CD14-positive monocyte (primary cell): ENCODE measurements at regions of chr18 and their contacts with region 1.

Region 1: DNA sequence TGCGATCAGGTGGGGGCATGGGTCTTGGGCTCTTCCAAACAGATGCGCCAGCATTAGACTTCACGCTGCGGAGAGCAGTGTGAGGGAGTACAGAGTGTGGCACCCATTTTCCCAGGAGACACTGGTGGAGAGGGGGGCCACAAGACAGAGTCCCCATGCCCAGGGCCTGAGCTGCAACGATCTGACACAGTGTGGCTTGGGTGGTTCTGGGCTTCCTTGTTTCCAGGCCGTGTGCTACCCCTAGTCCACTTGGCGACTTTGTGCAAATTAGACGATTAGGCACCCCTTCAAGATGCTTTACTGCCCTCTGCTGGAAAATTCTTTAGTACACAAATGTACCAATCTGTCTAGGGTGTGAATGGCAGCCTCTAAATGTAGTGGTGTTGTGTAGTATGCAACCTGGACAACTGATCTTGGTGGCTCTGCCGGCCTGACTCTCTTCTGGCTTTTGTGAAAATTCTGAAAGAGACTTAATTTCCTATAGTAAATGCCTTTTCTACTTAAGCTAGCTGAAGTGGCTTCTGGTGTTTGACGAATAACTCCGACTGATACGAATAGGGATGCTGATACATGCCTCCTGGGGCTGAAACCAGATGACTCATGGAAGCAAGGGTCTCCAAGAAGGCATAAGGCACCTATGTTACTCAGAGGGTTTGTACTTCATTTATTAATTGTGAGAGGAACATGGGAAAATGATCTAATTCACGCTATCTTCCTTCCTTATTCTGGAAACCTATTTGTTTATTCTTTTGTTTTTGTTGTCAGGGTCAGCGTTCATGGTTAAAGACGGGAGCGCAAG is 92.3 kb upstream of the SMAD2 start:
- DNase-seq: peak; percentile 65 to 82 (median 75)
- H3K4me3 ChIP-seq: no peak overlapping the region
- H3K4me3 Mint-ChIP-seq: peak overlapping the region in 1 of 2 donors; percentile 23
- H3K27ac ChIP-seq: no peak overlapping the region
- H3K27ac Mint-ChIP-seq: peak overlapping the region in 2 of 7 donors; percentile 23 to 75
- H3K4me1 ChIP-seq: no peaks in the 10 kb centered on the region
- H3K4me1 Mint-ChIP-seq: peaks cover 3% of the 10 kb centered on the region
- H3K27me3 ChIP-seq: peaks cover 0 to 8% of the 10 kb centered on the region in 2 donors
- H3K27me3 Mint-ChIP-seq: peaks cover 7 to 16% (median 10%) of the 10 kb centered on the region in 3 donors
- CTCF ChIP-seq: peak; percentile 75

Region 2: DNA sequence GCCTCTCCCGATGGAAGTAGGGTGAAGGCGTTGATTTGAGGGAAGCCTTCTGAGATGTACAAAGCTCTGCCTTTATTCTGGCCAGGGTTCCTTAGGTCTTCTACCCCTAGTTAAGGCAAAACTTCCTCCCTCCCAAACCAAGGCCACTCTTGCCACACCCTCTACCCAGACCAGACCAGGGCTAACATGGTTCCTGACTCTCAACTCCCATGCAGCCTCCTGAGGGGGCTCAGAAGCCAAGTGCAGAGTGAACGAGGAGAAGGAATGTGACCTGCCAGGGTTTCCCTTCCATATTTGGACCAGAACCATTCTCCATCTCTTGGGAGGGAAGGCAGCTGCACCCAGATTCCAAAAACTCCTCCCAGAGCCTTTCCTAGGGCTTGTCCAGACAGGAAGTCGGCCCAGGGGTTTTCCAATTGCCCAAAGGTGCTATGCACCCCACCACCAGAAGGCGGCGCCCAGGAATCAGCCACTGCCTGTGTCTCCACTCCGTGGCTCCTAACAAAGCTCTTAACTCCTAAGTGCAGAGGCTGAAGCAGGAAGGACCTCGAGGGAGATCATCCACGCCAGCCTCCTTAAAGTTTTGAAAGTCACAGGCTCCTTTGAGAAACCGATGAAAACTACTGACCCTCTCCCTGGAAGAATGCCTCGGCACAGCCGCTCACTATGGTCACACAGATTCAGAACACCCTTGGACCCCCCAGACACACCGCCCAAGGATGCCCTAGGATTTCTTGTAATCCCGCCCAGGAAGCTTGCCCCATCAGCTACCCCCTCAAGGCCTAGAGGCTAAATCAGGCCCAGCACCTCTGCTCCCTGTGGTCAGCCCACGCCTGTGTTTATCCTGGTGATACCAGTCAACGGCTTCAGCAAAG is 250.1 kb before region 1 on chr18:
- intact Hi-C with region 1: loop called (anchors 1 to 2 kb)
- DNase-seq: peak; percentile 18 to 53 (median 26)
- H3K4me3 ChIP-seq: no peak overlapping the region
- H3K4me3 Mint-ChIP-seq: no peak overlapping the region
- H3K27ac ChIP-seq: no peak overlapping the region
- H3K27ac Mint-ChIP-seq: peak overlapping the region in 1 of 7 donors; percentile 9
- H3K4me1 ChIP-seq: no peaks in the 10 kb centered on the region
- H3K4me1 Mint-ChIP-seq: no peaks in the 10 kb centered on the region
- H3K27me3 ChIP-seq: no peaks in the 10 kb centered on the region
- H3K27me3 Mint-ChIP-seq: peaks cover 7 to 10% (median 9%) of the 10 kb centered on the region in 3 donors
- CTCF ChIP-seq: peak; percentile 97

Region 3: DNA sequence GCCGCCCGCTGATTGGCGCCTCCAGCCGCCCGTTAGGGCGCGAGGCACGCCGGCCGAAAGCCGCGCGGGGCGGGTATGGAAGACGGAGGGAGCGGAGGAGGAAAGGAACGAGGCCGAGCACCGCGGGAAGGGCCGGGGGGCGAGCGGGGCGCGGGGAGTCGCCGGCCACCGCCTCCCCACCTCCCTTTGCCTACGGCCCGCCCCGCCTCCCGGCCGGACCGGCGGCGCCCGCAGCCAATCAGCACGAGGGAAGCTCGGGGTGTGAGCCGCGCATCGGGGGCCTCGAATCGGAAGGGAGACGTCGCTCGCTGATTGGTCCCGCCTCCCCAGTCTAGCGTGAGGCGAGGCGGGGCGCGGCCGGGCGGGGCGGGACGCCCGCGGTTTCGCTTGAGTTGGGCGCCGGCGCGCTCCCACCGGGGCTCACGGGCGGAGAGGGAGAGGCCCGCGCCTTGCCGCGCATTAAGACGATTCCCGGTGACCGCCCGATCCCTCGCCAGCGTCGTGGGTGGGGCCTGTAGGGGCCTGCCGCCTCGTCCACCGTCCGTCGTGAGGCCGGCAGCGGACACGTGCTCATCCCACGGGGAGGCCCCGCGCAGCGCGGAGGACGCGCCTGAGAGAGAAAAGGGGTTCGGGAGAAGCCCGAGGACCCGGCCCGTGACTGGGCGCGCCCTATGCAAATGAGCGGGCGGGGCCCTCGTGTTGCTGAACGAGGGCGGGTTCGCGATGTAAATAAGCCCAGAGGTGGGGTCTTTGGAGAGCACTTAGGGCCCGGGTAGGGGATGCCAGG is 91.6 kb before region 1 on chr18:
- intact Hi-C with region 1: loop called in 1 of 2 experiments (anchors 5 kb)
- DNase-seq: peak; percentile 93 to 94 (median 93)
- H3K4me3 ChIP-seq: peak overlapping the region; percentile 28 to 87 (median 46)
- H3K4me3 Mint-ChIP-seq: peak overlapping the region; percentile 78 to 86
- H3K27ac ChIP-seq: peak overlapping the region; percentile 87 to 94
- H3K27ac Mint-ChIP-seq: peak overlapping the region; percentile 88 to 94 (median 91)
- H3K4me1 ChIP-seq: peaks cover 35 to 41% of the 10 kb centered on the region in 2 donors
- H3K4me1 Mint-ChIP-seq: peaks cover 50% of the 10 kb centered on the region
- H3K27me3 ChIP-seq: no peaks in the 10 kb centered on the region
- H3K27me3 Mint-ChIP-seq: peaks cover 0 to 2% (median 0%) of the 10 kb centered on the region in 3 donors
- CTCF ChIP-seq: no peak

Region 4: GRCh38 chr18:47953471-47953931 is 69.2 kb before region 1 on chr18:
- intact Hi-C with region 1: no loop called
- DNase-seq: peak; percentile 86 to 94 (median 87)
- H3K4me3 ChIP-seq: peak overlapping the region in 1 of 3 experiments; percentile 16
- H3K4me3 Mint-ChIP-seq: peak overlapping the region in 1 of 2 donors; percentile 80
- H3K27ac ChIP-seq: peak overlapping the region; percentile 41 to 75
- H3K27ac Mint-ChIP-seq: peak overlapping the region; percentile 83 to 94 (median 90)
- H3K4me1 ChIP-seq: peaks cover 20 to 22% of the 10 kb centered on the region in 2 donors
- H3K4me1 Mint-ChIP-seq: peaks cover 16% of the 10 kb centered on the region
- H3K27me3 ChIP-seq: peaks cover 2 to 4% of the 10 kb centered on the region in 2 donors
- H3K27me3 Mint-ChIP-seq: peaks cover 6 to 14% (median 8%) of the 10 kb centered on the region in 3 donors
- CTCF ChIP-seq: no peak

Region 5: DNA sequence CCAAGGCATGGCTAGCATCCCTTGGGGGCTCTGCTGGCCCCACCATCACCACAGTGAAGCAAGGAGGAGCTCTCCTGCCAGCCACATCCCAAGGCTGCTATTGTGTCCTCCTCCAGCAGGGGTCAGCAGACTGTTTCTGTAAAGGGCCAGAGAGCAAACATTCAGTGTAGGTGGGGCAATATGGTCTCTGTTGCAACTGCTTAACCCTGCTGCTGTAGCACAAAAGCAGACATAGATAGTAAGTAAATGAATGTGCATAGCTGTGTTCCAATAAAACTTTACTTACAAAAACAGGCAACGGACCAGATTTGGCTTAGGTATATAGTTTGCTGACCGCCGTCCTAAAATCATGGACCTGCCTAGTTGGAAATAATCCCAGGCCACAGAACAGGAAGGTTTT is 422.8 kb after region 1 on chr18:
- intact Hi-C with region 1: loop called in 1 of 2 experiments (anchors 10 kb)
- DNase-seq: peak; percentile 62 to 80 (median 75)
- H3K4me3 ChIP-seq: no peak overlapping the region
- H3K4me3 Mint-ChIP-seq: no peak overlapping the region
- H3K27ac ChIP-seq: no peak overlapping the region
- H3K27ac Mint-ChIP-seq: no peak overlapping the region
- H3K4me1 ChIP-seq: peaks cover 4% of the 10 kb centered on the region in 2 donors
- H3K4me1 Mint-ChIP-seq: peaks cover 20% of the 10 kb centered on the region
- H3K27me3 ChIP-seq: peaks cover 11 to 22% of the 10 kb centered on the region in 2 donors
- H3K27me3 Mint-ChIP-seq: peaks cover 19 to 60% (median 25%) of the 10 kb centered on the region in 3 donors
- CTCF ChIP-seq: peak; percentile 94